ENCODE measurements at regions of chr11 and their contacts with region 1.

Region 1: GRCh38 chr11:93662177-93662575 is 694 bp downstream of the CEP295 start:
- DNase-seq: no peak
- H3K4me3 ChIP-seq: peak overlapping the region; percentile 61 to 77
- H3K4me3 Mint-ChIP-seq: peak overlapping the region; percentile 77 to 96 (median 90)
- H3K27ac ChIP-seq: peak overlapping the region; percentile 89
- H3K27ac Mint-ChIP-seq: peak overlapping the region; percentile 86 to 97 (median 96)
- H3K4me1 ChIP-seq: peaks cover 18% of the 10 kb centered on the region
- H3K4me1 Mint-ChIP-seq: peaks cover 27 to 34% (median 32%) of the 10 kb centered on the region in 4 donors
- H3K27me3 ChIP-seq: no peaks in the 10 kb centered on the region
- H3K27me3 Mint-ChIP-seq: no peaks in the 10 kb centered on the region

Region 2: DNA sequence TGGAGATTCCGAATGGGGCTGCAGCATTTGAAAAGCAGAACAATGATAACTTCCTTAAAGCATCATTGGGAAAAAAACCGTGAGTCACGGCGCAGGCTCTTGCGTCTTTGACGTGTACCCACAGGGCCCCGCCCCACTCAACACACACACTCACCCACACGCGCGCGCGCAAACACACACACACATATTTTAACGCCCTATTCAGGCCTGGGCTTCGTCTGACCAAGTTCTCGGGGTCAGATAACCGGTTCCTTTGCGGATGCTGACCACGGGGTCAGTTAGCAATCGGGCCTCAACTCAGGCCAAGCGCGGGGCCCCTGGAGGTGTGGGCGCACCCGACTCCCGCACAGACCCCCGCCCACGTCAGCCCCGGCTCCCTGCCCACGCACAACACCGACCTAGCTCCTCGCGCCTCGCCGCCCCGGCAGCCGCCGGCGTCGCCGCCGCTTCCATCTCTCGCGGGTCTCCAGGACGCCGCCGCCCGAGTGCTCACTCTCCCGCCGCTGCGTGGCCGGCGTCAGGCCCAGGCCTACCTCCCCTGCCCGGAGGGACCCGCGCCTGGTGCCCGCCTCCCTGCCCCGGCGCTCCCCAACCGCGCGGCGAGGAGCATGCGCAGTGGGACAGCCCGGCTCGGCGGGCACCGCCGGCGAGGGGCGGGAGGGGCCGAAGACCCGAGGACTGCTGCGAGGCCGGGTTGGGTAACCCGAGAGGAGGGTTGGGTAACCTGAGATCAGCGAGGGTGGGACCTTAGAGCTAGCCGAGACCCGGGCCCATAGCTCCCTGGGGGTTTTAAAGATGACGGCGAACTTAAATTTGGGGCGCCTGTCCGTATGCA is 464.6 kb before region 1 on chr11 and contains the start of gene SLC36A4:
- CTCF ChIA-PET with region 1: interaction called, 3 read pairs
- POLR2A ChIA-PET with region 1: interaction called, 9 read pairs
- intact Hi-C with region 1: loop called (anchors 1 kb)
- DNase-seq: peak; percentile 86 to 90 (median 88)
- H3K4me3 ChIP-seq: peak within 1 kb of the TSS; percentile 59 to 61
- H3K4me3 Mint-ChIP-seq: peak within 1 kb of the TSS; percentile 92 to 99 (median 96)
- H3K27ac ChIP-seq: peak within 1 kb of the TSS; percentile 92
- H3K27ac Mint-ChIP-seq: peak within 1 kb of the TSS; percentile 96 to 99 (median 98)
- H3K4me1 ChIP-seq: no peaks in the 10 kb centered on the region
- H3K4me1 Mint-ChIP-seq: peaks cover 15 to 34% (median 23%) of the 10 kb centered on the region in 4 donors
- H3K27me3 ChIP-seq: no peaks in the 10 kb centered on the region
- H3K27me3 Mint-ChIP-seq: peaks cover 0 to 3% of the 10 kb centered on the region in 2 donors
- total RNA-seq, gene SLC36A4: 15.4 to 21.5 TPM

Region 3: GRCh38 chr11:93646399-93646798 is 15.8 kb before region 1 on chr11:
- CTCF ChIA-PET with region 1: interaction called, 29 read pairs
- POLR2A ChIA-PET with region 1: interaction called, 12 read pairs
- intact Hi-C with region 1: no loop called
- DNase-seq: no peak
- H3K4me3 ChIP-seq: no peak overlapping the region
- H3K4me3 Mint-ChIP-seq: peak overlapping the region in 3 of 8 donors; percentile 4 to 44 (median 40)
- H3K27ac ChIP-seq: no peak overlapping the region
- H3K27ac Mint-ChIP-seq: peak overlapping the region; percentile 10 to 82 (median 57)
- H3K4me1 ChIP-seq: peaks cover 7% of the 10 kb centered on the region
- H3K4me1 Mint-ChIP-seq: peaks cover 8 to 14% (median 11%) of the 10 kb centered on the region in 4 donors
- H3K27me3 ChIP-seq: no peaks in the 10 kb centered on the region
- H3K27me3 Mint-ChIP-seq: peaks cover 0 to 3% of the 10 kb centered on the region in 2 donors

Region 4: GRCh38 chr11:93784152-93784934 is 122.2 kb after region 1 on chr11 and contains the start of gene MED17:
- CTCF ChIA-PET with region 1: interaction called, 5 read pairs
- POLR2A ChIA-PET with region 1: interaction called, 12 read pairs
- intact Hi-C with region 1: loop called (anchors 1 kb)
- DNase-seq: peak; percentile 84 to 91 (median 85)
- H3K4me3 ChIP-seq: peak within 1 kb of the TSS; percentile 93 to 94
- H3K4me3 Mint-ChIP-seq: peak within 1 kb of the TSS; percentile 93 to 100 (median 98)
- H3K27ac ChIP-seq: peak within 1 kb of the TSS; percentile 84
- H3K27ac Mint-ChIP-seq: peak within 1 kb of the TSS; percentile 68 to 99 (median 97)
- H3K4me1 ChIP-seq: peaks cover 37% of the 10 kb centered on the region
- H3K4me1 Mint-ChIP-seq: peaks cover 27 to 45% (median 36%) of the 10 kb centered on the region in 4 donors
- H3K27me3 ChIP-seq: no peaks in the 10 kb centered on the region
- H3K27me3 Mint-ChIP-seq: no peaks in the 10 kb centered on the region
- total RNA-seq, gene MED17: 73.2 to 78.5 TPM

Measured in CD4-positive, alpha-beta memory T cell (primary cell).